ENCODE measurements at regions of chr1 and their contacts with region 1.

Region 1: GRCh38 chr1:26391450-26391849 is 18.9 kb upstream of the ZNF683 start:
- DNase-seq: peak in 12 of 14 experiments; percentile 21 to 80 (median 36)
- ATAC-seq: peak; percentile 69
- H3K4me3 ChIP-seq: no peak overlapping the region
- H3K4me3 Mint-ChIP-seq: no peak overlapping the region
- H3K27ac ChIP-seq: no peak overlapping the region
- H3K27ac Mint-ChIP-seq: no peak overlapping the region
- H3K4me1 ChIP-seq: peaks cover 41% of the 10 kb centered on the region
- H3K4me1 Mint-ChIP-seq: peaks cover 20% of the 10 kb centered on the region
- H3K27me3 ChIP-seq: no peaks in the 10 kb centered on the region
- H3K27me3 Mint-ChIP-seq: no peaks in the 10 kb centered on the region
- CTCF ChIP-seq: peak; percentile 68

Region 2: GRCh38 chr1:26363549-26364448 is 27.7 kb before region 1 on chr1:
- CTCF ChIA-PET with region 1: interaction called, 4 read pairs
- POLR2A ChIA-PET with region 1: interaction called, 4 read pairs
- intact Hi-C with region 1: loop called in 1 of 2 experiments (anchors 2 kb)
- DNase-seq: peak; percentile 74 to 96 (median 84)
- ATAC-seq: peak; percentile 61
- H3K4me3 ChIP-seq: no peak overlapping the region
- H3K4me3 Mint-ChIP-seq: peak overlapping the region; percentile 69
- H3K27ac ChIP-seq: no peak overlapping the region
- H3K27ac Mint-ChIP-seq: no peak overlapping the region
- H3K4me1 ChIP-seq: peaks cover 79% of the 10 kb centered on the region
- H3K4me1 Mint-ChIP-seq: peaks cover 56% of the 10 kb centered on the region
- H3K27me3 ChIP-seq: peaks cover 0 to 21% of the 10 kb centered on the region in 2 experiments
- H3K27me3 Mint-ChIP-seq: peaks cover 28% of the 10 kb centered on the region
- CTCF ChIP-seq: peak; percentile 98